Right ventricle myocardium inferior (tissue), 1 donor: ENCODE measurements at regions of chr5 and their contacts with region 1.

Region 1: GRCh38 chr5:14664302-14665100 is at the start of gene OTULIN:
- DNase-seq: peak; percentile 96
- ATAC-seq: peak; percentile 98
- total RNA-seq, gene OTULIN: 22.4 TPM

Region 2: GRCh38 chr5:14351845-14352712 is 312.4 kb before region 1 on chr5:
- intact Hi-C with region 1: loop called (anchors 5 kb)
- DNase-seq: peak; percentile 82
- ATAC-seq: peak; percentile 85

Region 3: DNA sequence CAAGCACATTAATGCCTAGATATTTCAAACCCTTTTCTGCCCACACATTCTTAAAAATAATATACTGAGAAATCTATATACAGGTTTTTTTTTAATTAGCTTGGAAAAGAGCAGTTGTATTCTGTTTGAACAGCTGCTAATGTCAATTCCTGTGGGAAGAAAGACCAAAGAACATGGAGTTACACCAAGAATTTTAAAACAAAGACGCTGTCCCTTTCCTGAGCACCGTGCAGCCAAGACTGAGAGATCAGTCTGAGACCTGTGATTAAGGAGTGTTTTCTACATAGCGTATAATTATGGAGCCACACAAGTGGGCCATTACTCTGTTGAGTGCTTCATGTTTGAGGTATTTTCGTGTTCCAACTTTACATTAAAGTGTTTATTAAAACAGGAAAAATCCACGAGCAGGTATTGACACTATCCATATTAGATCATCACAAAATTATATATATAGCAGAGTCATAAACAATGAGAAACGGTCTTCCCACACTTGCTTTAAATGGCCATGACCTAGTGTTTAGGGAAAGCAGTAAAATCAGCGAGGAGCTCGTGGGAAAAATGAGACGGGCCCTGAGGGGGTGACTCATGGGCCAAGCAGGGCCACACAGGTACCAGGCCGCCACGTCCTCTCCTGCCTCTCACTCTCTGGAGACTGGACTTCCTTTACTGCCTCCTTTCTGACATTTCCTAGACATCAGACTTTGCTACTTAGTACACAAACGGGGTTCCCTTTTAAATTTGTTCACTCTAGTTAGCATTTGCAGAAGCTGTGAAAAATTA is 236.0 kb before region 1 on chr5:
- intact Hi-C with region 1: no loop called
- DNase-seq: no peak
- ATAC-seq: peak; percentile 75

Region 4: DNA sequence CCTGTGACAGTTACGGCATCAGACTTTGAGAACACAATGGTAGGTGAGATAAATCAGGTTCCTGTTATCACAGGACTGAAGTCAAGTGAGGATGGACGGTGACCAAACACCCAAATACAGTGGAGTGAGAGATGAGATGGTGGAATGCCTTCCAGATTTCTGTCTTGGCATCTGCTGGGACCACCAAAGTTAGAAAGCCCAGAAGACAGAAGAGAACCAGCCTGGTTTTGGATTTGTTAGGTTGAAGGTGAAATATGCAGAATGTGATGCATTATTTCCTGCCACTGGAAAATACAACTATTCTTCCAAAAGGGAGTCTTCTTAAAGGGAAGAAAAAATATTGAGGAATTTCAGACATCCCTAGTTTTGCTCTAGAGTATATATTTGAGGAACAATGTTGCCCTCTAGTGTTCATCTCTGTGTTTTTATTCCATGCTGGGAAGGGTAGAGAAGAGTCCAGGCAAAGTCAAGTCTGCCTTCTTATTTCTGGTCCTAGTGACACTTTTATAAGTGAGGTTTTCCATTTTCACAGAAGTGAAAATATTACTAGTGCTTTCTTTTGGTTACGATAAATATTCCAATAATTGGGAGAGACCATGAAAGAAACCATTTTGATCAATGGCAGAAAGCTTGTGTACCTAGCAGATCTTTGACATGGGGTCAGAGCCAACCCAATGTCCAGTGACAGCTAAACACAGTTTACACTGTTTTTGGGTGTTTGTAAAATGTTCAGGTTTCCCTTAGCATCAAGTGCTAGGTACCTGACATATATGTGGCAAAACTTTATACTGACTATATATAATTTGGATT is 349.4 kb after region 1 on chr5:
- intact Hi-C with region 1: loop called (anchors 5 kb)
- DNase-seq: no peak
- ATAC-seq: peak; percentile 79